ENCODE measurements at regions of chr1 and their contacts with region 1.

Region 1: DNA sequence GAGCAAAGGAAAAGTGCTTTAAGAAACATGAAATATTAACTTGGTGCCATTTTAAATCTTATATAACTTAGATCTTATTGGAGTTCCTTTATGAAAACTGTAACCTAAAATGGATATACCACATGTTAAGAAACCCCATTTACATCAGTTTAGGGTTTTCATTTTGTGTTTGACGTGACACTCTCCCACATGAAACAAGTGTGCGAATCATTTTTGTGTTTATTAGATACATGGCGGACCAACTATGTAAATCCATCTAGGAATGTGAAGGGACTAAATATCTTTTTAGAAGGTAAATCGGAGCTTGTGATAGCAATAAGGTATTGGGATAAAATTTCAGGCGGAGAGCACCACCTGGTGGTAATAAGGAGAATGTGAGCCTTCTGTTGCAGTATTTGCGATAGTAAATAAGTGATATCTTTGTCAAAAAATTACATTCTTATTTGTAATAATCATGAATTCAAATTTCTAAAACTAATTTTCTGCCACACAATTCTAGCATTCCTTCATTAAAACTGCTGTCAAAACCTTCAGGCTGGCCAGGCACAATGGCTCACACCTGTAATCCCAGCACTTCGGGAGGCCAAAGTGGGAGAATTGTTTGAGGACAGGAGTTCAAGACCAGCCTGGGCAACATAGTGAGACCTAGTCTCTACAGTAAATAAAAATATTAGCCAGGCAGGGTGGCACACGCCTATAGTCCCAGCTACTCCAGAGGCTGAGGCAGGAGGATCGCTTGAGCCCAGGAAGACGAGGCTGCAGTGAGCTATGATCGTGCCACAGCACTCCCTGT is 31.3 kb downstream of the SMAP2 start:
- DNase-seq: peak in 3 of 10 donors; percentile 36 to 47 (median 37)
- H3K4me3 ChIP-seq: peak overlapping the region in 28 of 59 donors; percentile 1 to 49 (median 26)
- H3K27ac ChIP-seq: peak overlapping the region in 41 of 59 donors; percentile 0 to 72 (median 43)
- H3K27me3 ChIP-seq: no peaks in the 10 kb centered on the region
- CTCF ChIP-seq: peak; percentile 78 to 98 (median 93)

Region 2: DNA sequence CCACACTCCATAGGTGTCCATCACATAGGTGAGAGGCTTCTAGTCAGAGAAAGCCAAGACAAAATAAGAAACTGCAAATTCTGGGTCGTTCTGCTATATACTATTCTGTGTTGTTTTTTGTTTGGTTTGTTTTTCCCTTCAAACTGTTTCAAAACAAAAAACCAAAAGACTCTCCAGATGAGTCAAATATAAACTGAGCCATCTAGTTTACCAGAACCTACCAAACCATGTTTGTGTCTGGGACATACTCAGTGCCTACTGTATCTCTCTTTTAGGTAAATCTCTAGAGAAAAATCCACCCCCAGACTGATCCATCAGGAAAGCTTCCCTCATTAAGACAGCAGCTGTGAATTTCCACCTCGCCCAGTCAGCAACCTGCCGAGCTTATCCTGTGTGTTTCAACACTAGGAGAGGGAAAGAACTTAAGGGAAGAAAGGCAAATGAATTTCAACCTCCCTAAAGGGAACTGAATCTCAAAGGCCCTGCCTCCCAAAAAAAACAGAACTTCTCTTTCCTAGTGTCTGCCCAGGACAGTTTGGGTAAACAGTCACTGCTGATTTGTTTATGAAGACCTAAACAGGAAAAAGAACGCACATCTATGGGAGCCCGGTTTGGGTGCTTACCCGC is 325.0 kb before region 1 on chr1:
- intact Hi-C with region 1: loop called in 1 of 2 experiments (anchors 10 kb)
- DNase-seq: no peak
- H3K4me3 ChIP-seq: no peak overlapping the region
- H3K27ac ChIP-seq: peak overlapping the region in 16 of 59 donors; percentile 0 to 53 (median 26)
- H3K27me3 ChIP-seq: no peaks in the 10 kb centered on the region
- CTCF ChIP-seq: no peak

Region 3: DNA sequence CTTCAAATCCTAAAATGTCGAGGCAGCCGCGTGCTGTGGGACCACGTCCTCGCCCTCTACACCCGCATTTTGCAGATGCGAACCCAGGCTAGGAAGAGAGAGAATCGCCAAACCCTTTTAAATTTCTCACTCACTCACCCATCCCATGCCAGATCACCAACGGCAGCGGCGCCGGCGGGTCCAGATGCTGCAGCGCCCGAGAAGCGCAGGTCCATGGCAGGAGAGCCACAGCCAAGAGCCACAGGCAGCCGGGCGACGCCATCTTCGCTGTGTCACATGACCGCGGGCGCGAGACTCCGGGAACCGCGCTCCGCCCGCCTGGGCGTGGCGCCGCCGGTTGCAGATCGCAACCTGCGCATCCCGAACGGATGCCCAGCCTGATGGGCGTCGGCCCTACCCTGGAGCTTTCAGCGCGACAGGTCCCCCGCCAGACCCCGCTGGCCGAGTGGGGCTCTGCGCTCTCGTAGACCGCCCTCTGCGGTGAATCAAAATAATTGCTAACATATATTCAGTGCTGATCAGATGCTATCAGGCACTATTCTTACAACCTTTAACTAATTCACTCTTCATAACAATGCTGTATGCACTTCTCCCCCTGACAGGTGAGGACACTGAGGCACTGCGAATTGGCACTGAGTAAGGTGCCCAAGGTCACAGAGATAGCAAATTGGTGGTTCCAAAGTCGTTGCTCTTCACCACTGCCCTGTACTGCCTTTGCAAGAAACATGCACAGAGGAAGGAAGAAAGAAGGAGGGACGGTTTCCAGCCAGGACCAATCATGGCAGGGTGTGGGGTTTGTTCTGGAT is 307.7 kb before region 1 on chr1 and contains the start of gene PPT1:
- intact Hi-C with region 1: loop called in 1 of 2 experiments (anchors 10 kb)
- DNase-seq: peak; percentile 79 to 92 (median 87)
- H3K4me3 ChIP-seq: peak within 1 kb of the TSS; percentile 58 to 97 (median 81)
- H3K27ac ChIP-seq: peak within 1 kb of the TSS; percentile 66 to 97 (median 85)
- H3K27me3 ChIP-seq: no peaks in the 10 kb centered on the region
- CTCF ChIP-seq: peak in 52 of 56 donors; percentile 7 to 66 (median 40)
- total RNA-seq, gene PPT1: 72.4 to 166 (median 118) TPM

Region 4: GRCh38 chr1:40153073-40153770 is 251.6 kb before region 1 on chr1:
- intact Hi-C with region 1: loop called (anchors 5 kb)
- DNase-seq: no peak
- H3K4me3 ChIP-seq: peak overlapping the region in 9 of 59 donors; percentile 0 to 32 (median 12)
- H3K27ac ChIP-seq: peak overlapping the region in 1 of 59 donors; percentile 26
- H3K27me3 ChIP-seq: no peaks in the 10 kb centered on the region
- CTCF ChIP-seq: peak; percentile 36 to 89 (median 70)

Region 5: DNA sequence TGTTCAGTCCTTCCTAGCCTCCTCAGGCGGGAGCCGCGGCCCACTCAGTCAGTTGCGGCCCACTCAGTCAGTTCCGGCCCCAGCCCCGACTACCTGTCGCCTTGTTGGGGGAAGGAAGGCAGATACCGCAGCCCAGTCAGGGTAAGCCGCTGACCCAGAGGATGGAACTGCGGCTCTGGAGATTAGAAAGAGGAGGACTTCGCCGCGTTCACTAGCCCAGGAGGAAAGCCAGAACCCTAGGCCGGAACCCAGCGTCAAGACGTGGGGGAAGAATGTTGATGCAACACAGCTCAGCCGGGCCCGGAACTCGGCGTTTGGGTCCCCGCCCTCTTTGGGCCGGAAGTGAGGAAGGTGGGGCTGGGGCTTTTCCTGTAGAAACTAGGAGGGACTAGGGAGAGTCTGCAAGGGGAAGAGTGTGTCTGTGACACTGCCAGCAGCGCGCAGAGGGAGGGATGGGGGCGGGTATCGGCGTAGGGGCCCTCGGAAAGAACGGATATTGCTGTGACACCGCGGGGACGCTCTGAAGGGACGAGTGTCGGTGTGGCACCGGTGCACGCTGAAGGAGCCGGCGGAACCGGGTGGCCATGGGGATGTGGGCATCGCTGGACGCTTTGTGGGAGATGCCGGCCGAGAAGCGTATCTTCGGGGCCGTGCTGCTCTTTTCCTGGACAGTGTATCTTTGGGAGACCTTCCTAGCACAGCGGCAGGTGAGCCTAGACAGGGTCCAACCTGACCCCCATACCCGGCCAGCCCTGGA is 147.0 kb before region 1 on chr1 and contains the start of gene ZMPSTE24:
- intact Hi-C with region 1: loop called in 1 of 2 experiments (anchors 5 kb)
- DNase-seq: peak; percentile 91 to 97 (median 95)
- H3K4me3 ChIP-seq: peak within 1 kb of the TSS; percentile 65 to 100 (median 91)
- H3K27ac ChIP-seq: peak within 1 kb of the TSS; percentile 75 to 99 (median 93)
- H3K27me3 ChIP-seq: no peaks in the 10 kb centered on the region
- CTCF ChIP-seq: peak in 39 of 56 donors; percentile 4 to 60 (median 25)
- total RNA-seq, gene ZMPSTE24: 20.8 to 36.8 (median 28.6) TPM

Region 6: DNA sequence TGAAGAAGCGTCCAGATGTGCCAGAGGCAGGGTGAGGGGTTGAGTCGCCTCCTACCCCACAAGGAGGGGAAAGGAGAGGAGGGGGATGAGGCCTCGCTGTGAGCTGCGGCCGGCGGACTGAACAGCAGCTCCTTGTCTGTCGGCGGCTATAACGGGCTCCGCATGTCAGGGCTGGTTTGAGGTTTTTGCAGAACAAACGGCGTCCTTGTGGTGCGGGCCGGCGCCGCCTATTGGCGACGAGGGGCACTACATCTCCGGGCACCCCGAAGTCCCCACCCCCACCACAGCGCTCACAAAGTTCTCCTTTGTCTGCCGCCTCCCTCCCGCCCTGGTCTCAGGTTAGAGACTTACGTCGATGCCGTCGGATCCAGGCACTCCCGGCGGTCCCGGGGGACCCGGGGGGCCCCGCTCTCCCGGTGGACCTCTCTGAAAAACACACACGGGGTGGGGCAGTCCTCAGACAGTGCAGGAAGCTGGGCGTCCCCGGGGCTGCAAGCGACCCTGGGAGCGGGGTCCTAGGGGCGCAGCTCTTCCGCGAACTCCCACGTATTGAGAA is 89.5 kb before region 1 on chr1:
- intact Hi-C with region 1: loop called (anchors 10 kb)
- DNase-seq: peak; percentile 61 to 91 (median 89)
- H3K4me3 ChIP-seq: peak overlapping the region; percentile 43 to 85 (median 66)
- H3K27ac ChIP-seq: peak overlapping the region; percentile 76 to 100 (median 98)
- H3K27me3 ChIP-seq: peaks cover 0 to 30% (median 13%) of the 10 kb centered on the region in 45 donors
- CTCF ChIP-seq: peak; percentile 69 to 98 (median 90)

Region 7: GRCh38 chr1:40344597-40344996 is 60.3 kb before region 1 on chr1:
- intact Hi-C with region 1: loop called in 1 of 2 experiments (anchors 5 kb)
- DNase-seq: peak in 6 of 10 donors; percentile 14 to 52 (median 40)
- H3K4me3 ChIP-seq: peak overlapping the region in 25 of 59 donors; percentile 3 to 35 (median 17)
- H3K27ac ChIP-seq: peak overlapping the region in 7 of 59 donors; percentile 4 to 53 (median 23)
- H3K27me3 ChIP-seq: no peaks in the 10 kb centered on the region
- CTCF ChIP-seq: peak in 3 of 56 donors; percentile 10 to 18 (median 15)

Region 8: GRCh38 chr1:40612345-40612831 is 207.5 kb after region 1 on chr1:
- intact Hi-C with region 1: no loop called
- DNase-seq: peak in 7 of 10 donors; percentile 54 to 76 (median 64)
- H3K4me3 ChIP-seq: peak overlapping the region in 5 of 59 donors; percentile 8 to 31 (median 21)
- H3K27ac ChIP-seq: peak overlapping the region in 18 of 59 donors; percentile 4 to 77 (median 44)
- H3K27me3 ChIP-seq: no peaks in the 10 kb centered on the region
- CTCF ChIP-seq: peak; percentile 46 to 92 (median 84)

Measured in dorsolateral prefrontal cortex (tissue), 120 donors.